ENCODE measurements at regions of chr9 and their contacts with region 1.

Region 1: DNA sequence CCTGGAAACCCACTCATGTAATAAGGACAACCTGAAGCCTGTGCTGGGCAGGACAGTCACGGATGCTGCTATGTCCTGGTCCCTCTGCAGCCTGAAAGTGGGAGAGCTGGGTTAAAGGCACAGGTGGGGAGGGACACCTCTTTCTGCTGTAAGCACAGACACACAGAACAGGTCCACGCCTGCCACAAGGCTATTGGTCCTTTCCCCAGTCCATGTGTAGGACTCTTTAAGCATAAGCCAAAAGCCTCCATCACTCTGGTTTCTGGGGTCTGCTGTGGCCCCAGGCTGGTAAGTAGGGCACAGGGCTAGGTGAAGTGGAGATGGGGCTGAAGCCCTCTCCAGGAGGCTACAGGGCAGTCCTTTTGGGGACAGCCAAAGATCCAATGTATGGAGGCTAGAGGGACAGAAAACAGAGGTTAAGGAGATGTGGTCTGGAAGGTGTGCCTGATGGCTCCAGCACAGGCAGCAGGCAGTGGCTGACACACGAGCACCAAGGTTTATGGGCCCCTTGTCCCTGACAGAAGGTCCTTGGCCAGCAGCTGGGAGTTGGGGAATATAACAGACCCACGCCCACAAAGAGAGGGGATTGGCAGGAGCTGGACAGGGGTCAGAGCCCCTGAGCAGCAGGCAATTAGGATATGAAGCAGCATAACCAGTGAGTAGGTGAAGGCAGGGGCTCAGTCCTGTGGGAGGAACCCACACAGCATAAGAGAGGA is 203.6 kb upstream of the MVB12B start:
- DNase-seq: peak; percentile 24

Region 2: DNA sequence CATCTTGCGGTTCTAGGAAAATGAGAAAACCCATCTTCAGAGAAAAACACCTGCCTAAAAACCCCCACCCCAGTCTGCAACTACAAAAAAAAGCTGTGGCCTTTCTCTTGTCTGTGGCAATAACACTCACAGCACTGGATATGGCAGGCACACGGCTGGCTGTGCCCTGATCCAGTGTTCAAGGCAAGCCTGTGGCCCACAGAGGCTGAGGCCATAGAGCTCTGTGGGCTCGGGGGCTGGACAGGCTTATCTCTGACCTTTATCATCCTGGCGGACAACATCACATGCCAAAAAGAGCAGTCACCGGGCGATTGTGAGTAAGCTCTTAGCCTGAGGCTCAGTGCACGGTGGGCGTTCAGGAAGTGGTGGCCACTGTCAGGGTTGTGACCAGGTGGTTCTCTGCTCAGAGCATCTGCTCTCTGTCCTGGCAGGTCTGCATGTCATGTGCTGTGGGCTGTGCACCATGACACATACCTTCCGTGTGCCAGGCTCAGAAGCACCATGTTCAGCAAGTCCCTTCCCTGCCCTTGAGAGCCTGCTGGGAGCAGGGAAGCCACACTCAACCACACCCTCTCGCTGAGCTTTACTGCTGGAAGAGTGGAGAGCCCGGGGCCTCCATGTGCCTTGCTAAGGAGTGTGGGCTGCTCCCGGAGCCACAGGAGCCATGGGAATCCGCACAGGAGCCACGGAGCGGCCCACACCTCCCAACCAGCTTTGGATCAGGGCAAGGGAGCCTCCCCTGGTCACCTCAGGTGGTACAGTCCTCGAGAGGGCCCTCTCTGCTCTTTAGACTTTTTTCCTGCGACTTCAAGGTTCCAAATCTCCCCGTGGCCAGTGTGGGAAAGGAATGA is 1304.4 kb before region 1 on chr9:
- intact Hi-C with region 1: loop called in 1 of 2 experiments (anchors 5 kb)
- DNase-seq: no peak

Region 3: GRCh38 chr9:127159325-127159801 is 1036.3 kb after region 1 on chr9:
- intact Hi-C with region 1: no loop called
- DNase-seq: peak; percentile 67